Adrenal gland (tissue), 19 donors: ENCODE measurements at regions of chr16 and their contacts with region 1.

Region 1: DNA sequence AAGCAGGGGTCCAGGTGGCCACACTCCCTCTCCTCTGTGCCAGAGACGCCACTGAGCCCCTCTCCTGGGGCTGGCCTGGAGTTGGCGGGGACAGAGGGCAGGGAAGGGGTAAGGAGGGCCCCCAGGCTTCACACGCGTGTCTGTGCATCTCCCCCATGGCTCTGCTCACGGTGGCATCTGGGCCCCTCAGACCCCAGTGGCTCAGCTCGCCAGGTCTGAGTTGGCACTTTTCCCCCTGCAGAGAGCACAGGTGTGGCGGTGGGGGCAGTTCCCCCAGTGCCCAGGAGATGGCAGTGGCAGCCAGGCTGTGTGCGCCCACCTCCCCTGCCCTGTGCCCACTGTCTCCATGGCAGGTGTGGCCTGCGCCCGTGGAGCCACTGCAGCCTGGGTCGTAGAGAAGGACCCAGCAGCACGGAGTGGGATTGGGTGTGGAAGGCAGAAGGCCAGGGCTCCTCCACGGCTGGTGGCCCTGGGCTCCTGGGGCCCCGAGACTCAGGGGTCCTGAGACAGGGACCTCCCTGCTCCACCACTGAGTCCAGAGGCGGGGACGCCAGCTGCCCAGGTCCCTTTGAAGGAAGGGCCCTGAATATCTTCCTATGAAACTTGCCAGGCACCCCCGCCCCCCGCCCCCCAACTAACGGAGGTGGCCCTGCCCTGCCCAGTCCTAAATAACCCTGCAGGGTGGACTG is 4.3 kb upstream of the APRT start:
- DNase-seq: peak in 3 of 7 donors; percentile 55 to 63 (median 61)
- H3K4me3 ChIP-seq: no peak overlapping the region
- H3K27ac ChIP-seq: no peak overlapping the region
- H3K4me1 ChIP-seq: peaks cover 15 to 23% of the 10 kb centered on the region in 2 donors
- H3K27me3 ChIP-seq: no peaks in the 10 kb centered on the region
- CTCF ChIP-seq: peak; percentile 44 to 83 (median 71)
- POLR2A ChIP-seq: no peak

Region 2: DNA sequence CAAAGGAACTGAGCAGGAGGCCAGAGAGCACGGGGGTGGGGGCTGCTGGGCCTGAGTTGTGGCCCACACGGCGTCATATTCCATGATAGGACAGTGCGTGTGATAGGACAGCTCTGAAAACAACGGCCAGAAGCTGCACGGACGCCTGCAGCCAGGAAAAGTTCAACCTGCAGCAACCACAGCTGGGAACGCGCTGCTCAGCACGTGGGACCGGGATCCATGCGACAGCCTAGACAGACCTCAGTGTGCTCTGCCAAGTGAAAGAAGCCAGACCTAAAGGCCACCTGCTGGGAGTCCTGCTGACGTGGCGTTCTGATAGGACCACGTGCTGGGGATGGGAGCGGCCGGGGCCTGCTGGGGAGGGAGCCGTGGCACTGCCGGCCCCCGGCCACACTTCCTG is 88.2 kb before region 1 on chr16:
- intact Hi-C with region 1: no loop called
- DNase-seq: no peak
- H3K4me3 ChIP-seq: no peak overlapping the region
- H3K27ac ChIP-seq: no peak overlapping the region
- H3K4me1 ChIP-seq: no peaks in the 10 kb centered on the region
- H3K27me3 ChIP-seq: no peaks in the 10 kb centered on the region
- CTCF ChIP-seq: no peak
- POLR2A ChIP-seq: no peak

Region 3: DNA sequence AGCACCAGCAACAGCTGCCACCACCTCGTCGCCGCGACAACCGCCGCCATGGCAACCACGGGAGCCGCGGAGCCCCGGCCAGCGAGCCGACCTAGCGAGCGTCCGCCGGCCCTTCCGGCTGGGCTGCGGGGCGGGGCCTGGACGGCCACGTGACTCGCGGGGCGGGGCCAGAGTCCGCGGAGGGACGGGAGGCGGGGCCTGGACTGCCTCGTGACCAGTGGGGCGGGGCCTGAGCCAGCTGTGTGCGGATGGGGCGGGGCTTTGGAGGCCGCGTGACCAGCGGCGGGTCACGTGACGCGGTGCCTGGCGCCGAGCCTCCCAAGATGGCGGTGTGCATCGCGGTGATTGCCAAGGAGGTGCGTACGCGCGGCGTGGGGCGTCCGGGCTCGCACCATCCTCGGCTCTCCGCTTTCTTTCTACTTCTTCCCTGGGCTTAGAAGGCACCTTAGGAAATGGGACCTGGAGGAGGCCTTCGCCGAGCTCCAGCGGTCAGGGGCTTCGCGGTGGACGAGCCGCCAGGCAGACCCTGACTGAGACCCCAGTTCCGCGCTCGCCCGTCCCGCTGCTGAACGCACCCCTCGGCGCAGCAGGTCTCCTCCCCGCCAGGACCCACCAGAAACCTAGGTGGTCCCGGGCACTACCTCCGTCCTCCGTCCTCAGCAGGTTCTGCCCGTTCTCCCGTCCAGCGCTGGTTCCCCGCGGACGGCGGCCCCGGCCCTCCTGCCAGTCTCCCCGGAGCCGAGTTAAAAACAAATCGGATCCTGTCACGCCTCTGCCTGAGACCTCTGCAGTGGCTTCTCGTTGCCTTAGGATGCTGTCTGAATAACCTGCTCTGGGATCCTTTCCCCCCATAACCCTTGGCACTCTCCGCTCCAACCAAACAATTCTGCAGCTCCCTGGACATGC is 41.0 kb after region 1 on chr16 and contains the starts of genes GALNS and TRAPPC2L:
- intact Hi-C with region 1: loop called in 1 of 2 experiments (anchors 5 kb)
- DNase-seq: peak; percentile 97 to 100 (median 99)
- H3K4me3 ChIP-seq: peak within 1 kb of the TSS; percentile 68 to 97 (median 89)
- H3K27ac ChIP-seq: peak within 1 kb of the TSS; percentile 36 to 92 (median 86)
- H3K4me1 ChIP-seq: peaks cover 18 to 60% of the 10 kb centered on the region in 2 donors
- H3K27me3 ChIP-seq: no peaks in the 10 kb centered on the region
- CTCF ChIP-seq: peak in 1 of 6 experiments; percentile 2
- POLR2A ChIP-seq: peak; percentile 37 to 88
- total RNA-seq, gene GALNS: 12.6 to 57.0 (median 35.9) TPM
- total RNA-seq, gene TRAPPC2L: 56.7 to 279 (median 121) TPM

Region 4: DNA sequence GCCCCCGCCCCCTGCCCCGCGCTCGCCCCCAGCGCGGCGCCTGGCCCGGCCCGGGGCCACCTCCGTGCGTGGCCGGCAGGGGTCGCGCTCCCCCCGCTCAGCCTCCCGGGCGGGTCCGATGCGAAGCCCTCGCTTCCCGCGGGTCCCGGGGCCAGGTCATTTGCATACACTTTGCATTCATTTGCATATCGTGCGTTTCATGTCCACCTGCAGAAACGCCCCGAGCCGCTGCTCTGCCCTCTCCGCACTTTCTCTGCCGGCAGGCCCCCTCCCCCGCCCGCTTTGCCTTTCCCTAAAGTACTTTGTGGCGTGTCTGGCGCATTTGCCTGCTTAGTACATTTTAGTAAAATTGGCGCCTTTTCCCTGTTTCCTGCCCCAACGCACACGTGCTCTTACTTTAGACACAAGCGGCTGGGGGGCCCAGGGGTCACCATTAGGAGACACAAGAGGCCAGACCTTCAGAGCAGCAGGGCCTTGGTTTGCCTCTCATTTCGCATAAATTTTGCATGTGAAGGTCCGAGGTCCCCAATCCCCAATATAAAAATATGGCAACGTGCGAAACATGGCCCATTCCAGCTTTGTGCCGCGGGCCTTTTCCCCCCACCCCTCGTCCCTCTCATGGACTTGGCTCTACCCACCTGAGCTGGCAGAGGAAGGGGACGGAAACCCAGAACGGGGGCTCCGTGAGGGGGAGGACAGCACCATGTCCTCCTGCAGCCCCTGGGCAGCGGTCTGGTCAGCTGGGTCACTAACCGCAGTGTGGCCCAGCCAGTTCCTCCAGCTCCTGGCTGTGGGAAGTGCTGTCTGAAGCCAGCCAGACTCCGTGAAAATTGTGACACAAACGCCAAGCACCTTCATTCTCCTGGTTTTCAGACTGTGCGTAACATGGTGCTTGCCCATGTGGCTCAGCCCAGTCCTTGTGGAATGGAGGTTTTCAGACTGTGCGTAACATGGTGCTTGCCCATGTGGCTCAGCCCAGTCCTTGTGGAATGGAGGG is 126.2 kb after region 1 on chr16:
- intact Hi-C with region 1: loop called in 1 of 2 experiments (anchors 1 kb)
- DNase-seq: peak in 1 of 7 donors; percentile 68
- H3K4me3 ChIP-seq: peak overlapping the region in 1 of 4 donors; percentile 66
- H3K27ac ChIP-seq: no peak overlapping the region
- H3K4me1 ChIP-seq: peaks cover 4 to 19% of the 10 kb centered on the region in 2 donors
- H3K27me3 ChIP-seq: peaks cover 17% of the 10 kb centered on the region
- CTCF ChIP-seq: peak in 5 of 6 experiments; percentile 9 to 78 (median 59)
- POLR2A ChIP-seq: no peak

Region 5: DNA sequence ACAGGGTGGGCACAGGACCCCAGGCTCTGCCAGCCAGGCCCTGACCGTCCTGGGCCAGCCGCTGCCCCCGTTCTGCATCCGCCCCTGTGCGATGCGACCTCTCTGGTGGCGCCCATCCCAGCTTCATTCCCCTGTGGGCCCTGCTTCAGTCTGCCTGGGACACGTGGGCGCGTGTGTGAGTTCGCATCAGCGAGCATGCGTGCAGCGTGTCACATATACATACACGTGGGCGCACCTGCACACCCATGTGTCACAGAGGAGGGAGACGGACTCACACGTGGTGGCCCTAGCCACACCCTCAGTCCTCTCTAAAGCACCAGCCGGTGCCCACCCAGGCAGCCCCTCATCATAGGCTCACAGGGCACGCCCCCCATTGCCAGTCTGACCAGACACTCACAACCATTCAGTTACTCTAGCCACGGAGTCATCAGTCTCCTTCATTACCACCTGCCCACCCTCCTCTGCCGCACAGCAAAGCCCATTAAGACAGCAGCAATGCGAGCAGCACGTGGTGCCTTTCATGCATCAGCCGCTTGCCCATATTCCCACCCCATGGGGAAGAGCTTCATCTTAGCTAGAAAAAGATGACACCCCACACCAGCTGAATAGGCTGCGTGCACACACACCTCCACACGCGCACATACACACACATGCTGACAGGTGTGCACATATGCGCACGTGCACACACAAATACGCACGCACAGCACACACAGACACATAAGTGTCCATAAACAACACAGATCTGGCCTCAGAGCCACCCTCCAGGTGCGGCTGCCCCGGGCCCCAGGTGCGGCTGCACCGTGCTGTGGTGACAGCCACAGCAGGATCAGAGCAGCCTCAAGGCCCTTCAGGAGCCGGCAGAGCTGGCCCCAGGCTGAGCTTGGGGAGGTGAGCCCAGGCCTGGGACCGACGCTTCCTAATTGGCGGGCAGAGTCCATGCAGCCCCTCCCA is 346.0 kb after region 1 on chr16:
- intact Hi-C with region 1: loop called (anchors 5 kb)
- DNase-seq: no peak
- H3K4me3 ChIP-seq: no peak overlapping the region
- H3K27ac ChIP-seq: no peak overlapping the region
- H3K4me1 ChIP-seq: peaks cover 0 to 3% of the 10 kb centered on the region in 2 donors
- H3K27me3 ChIP-seq: no peaks in the 10 kb centered on the region
- CTCF ChIP-seq: no peak
- POLR2A ChIP-seq: no peak